B cell (primary cell): ENCODE measurements at regions of chr13 and their contacts with region 1.

Region 1: GRCh38 chr13:20942938-20943559 is 40.5 kb upstream of the XPO4 start:
- DNase-seq: no peak
- ATAC-seq: no peak
- H3K4me3 ChIP-seq: no peak overlapping the region
- H3K4me3 Mint-ChIP-seq: no peak overlapping the region
- H3K27ac ChIP-seq: no peak overlapping the region
- H3K27ac Mint-ChIP-seq: no peak overlapping the region
- H3K4me1 ChIP-seq: peaks cover 6 to 10% of the 10 kb centered on the region in 2 donors
- H3K4me1 Mint-ChIP-seq: peaks cover 9% of the 10 kb centered on the region
- H3K27me3 ChIP-seq: peaks cover 0 to 13% (median 2%) of the 10 kb centered on the region in 4 experiments
- H3K27me3 Mint-ChIP-seq: peaks cover 45% of the 10 kb centered on the region
- CTCF ChIP-seq: no peak

Region 2: DNA sequence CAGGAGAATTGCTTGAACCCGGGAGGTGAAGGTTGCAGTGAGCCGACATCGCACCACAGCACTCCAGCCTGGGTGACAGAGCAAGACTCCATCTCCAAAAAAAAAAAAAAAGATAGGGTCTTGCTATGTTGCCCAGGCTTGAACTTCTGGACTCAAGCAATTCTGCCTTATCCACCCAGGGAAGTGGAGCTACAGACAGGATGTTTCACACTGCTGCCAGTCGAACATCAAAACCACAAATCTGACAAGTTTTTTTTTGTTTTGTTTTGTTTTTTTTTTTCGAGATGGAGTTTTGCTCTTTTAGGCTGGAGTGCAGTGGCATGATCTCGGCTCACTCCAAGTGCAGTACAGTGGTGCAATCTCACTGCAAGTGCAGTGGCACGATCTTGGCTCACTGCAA is 51.3 kb before region 1 on chr13:
- CTCF ChIA-PET with region 1: no interaction called
- POLR2A ChIA-PET with region 1: no interaction called
- intact Hi-C with region 1: no loop called
- DNase-seq: no peak
- ATAC-seq: no peak
- H3K4me3 ChIP-seq: no peak overlapping the region
- H3K4me3 Mint-ChIP-seq: no peak overlapping the region
- H3K27ac ChIP-seq: no peak overlapping the region
- H3K27ac Mint-ChIP-seq: no peak overlapping the region
- H3K4me1 ChIP-seq: no peaks in the 10 kb centered on the region
- H3K4me1 Mint-ChIP-seq: peaks cover 15% of the 10 kb centered on the region
- H3K27me3 ChIP-seq: no peaks in the 10 kb centered on the region
- H3K27me3 Mint-ChIP-seq: no peaks in the 10 kb centered on the region
- CTCF ChIP-seq: no peak

Region 3: DNA sequence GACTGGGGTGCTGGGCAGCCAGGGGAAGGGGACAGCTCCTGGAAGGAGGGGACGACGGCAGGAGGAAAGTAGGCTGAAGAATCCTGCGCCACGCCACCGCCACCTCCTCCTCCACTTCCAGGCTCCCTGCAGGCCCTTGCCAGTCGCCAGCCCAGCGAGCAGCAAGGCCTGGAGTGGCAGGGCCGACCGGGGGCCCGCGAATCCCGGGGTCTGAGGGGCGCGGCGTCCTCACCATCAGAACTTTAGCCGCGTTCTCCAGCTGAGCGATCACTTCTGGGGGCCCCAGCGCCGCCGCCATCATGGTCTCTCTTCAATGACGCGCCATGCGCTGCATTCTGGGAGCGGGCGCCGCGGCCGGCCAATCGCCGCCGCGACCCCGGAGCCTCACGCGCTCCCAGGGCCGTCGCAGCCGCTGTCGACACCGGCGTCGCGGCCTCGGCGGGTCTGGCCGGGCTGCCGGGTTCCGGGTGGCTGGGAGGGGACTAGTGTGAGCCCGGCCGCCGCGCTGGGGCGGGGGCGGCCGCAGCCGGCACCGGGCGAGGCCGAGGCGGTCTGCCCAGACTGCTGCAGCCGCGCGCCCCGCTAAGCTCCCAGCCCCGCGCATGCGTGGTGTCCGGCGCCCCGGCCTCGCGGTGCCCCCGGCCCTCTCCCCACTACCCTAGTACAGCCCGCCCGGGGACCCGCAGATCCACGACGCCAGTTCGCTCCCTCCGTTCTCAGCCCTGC is 40.4 kb before region 1 on chr13 and contains the start of gene XPO4:
- CTCF ChIA-PET with region 1: no interaction called
- POLR2A ChIA-PET with region 1: no interaction called
- intact Hi-C with region 1: no loop called
- DNase-seq: peak; percentile 89
- ATAC-seq: peak; percentile 91
- H3K4me3 ChIP-seq: peak within 1 kb of the TSS; percentile 62 to 98 (median 96)
- H3K4me3 Mint-ChIP-seq: peak within 1 kb of the TSS; percentile 94
- H3K27ac ChIP-seq: peak within 1 kb of the TSS; percentile 91 to 97
- H3K27ac Mint-ChIP-seq: peak within 1 kb of the TSS; percentile 94
- H3K4me1 ChIP-seq: peaks cover 10 to 11% of the 10 kb centered on the region in 2 donors
- H3K4me1 Mint-ChIP-seq: peaks cover 30% of the 10 kb centered on the region
- H3K27me3 ChIP-seq: no peaks in the 10 kb centered on the region
- H3K27me3 Mint-ChIP-seq: no peaks in the 10 kb centered on the region
- CTCF ChIP-seq: no peak
- total RNA-seq, gene XPO4: 25.9 and 30.6 TPM in 2 replicates

Region 4: GRCh38 chr13:21115231-21115630 is 172.2 kb after region 1 on chr13:
- CTCF ChIA-PET with region 1: no interaction called
- POLR2A ChIA-PET with region 1: no interaction called
- intact Hi-C with region 1: no loop called
- DNase-seq: no peak
- ATAC-seq: no peak
- H3K4me3 ChIP-seq: no peak overlapping the region
- H3K4me3 Mint-ChIP-seq: no peak overlapping the region
- H3K27ac ChIP-seq: no peak overlapping the region
- H3K27ac Mint-ChIP-seq: no peak overlapping the region
- H3K4me1 ChIP-seq: no peaks in the 10 kb centered on the region
- H3K4me1 Mint-ChIP-seq: no peaks in the 10 kb centered on the region
- H3K27me3 ChIP-seq: no peaks in the 10 kb centered on the region
- H3K27me3 Mint-ChIP-seq: no peaks in the 10 kb centered on the region
- CTCF ChIP-seq: no peak

Region 5: GRCh38 chr13:22801402-22802003 is 1858.5 kb after region 1 on chr13:
- CTCF ChIA-PET with region 1: interaction called, 10 read pairs
- POLR2A ChIA-PET with region 1: no interaction called
- intact Hi-C with region 1: no loop called
- DNase-seq: no peak
- ATAC-seq: no peak
- H3K4me3 ChIP-seq: no peak overlapping the region
- H3K4me3 Mint-ChIP-seq: no peak overlapping the region
- H3K27ac ChIP-seq: no peak overlapping the region
- H3K27ac Mint-ChIP-seq: no peak overlapping the region
- H3K4me1 ChIP-seq: no peaks in the 10 kb centered on the region
- H3K4me1 Mint-ChIP-seq: no peaks in the 10 kb centered on the region
- H3K27me3 ChIP-seq: no peaks in the 10 kb centered on the region
- H3K27me3 Mint-ChIP-seq: no peaks in the 10 kb centered on the region
- CTCF ChIP-seq: no peak